Right ventricle myocardium inferior (tissue), 1 donor: ENCODE measurements at regions of chr14 and their contacts with region 1.

Region 1: DNA sequence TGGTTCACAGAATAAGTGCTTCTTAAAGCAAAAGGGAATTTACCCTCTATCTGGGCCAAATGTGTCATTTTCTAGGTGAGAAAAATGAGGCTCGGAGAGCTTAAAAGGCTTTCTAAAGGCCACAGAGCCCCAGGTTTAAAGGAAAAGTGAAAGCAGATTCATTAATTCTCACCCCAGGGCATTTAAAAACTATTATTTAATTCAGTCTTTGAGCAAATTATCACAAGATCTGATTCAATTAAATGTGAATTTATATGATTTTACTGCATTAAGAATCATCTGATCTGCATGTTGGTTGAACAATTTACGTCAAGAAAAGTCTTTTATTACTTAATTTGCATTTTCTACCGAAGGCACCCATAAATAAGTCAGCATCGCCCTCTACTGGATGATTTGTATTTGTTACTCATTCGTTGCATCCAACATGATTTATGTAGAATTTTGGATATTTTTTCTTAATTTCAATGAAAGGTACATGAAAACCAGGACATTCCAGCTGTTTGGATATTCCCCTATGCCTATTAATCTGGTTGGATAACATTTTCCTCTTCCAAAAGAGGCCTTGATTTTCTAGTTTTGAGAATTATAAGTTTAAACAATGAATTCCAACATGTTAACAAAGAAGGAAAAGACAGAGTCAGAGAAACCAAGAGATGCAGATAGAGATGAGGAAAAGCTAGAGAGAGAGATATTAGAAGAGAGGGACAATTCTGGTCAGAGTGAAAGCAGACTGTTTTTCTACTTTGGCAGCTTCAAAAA is 19.1 kb upstream of the DHRS7 start:
- DNase-seq: no peak
- ATAC-seq: no peak

Region 2: DNA sequence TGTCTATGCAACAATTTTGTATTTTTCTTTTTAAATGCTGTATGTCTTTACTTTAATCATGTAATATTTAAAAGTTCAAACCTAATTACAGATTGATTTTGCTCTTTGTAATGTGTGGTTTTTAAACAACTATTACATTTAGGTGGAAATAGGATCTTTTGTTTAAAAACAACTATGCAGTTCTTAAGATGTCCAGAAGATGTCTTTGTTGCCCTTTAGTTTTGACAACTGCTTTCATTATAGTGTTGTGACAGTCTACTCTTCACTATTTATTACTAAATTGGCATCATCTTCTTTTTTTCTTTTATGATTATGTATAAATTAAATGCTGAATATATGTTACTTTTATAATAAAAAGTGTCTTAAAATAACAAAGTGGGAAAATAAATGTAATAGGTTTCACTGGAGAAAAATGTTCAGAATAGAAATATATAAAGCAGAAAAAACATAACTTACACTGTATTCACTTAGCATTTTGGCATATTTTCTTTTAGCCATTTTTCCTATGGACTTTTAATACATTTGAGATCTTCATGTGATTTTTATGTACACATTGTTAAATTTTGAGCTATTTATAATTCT is 119.7 kb before region 1 on chr14:
- intact Hi-C with region 1: loop called (anchors 2 kb)
- DNase-seq: no peak
- ATAC-seq: no peak